CD8-positive, alpha-beta memory T cell (primary cell): ENCODE measurements at regions of chr5 and their contacts with region 1.

Region 1: GRCh38 chr5:79857714-79858409 is 133.2 kb downstream of the MTX3 start:
- DNase-seq: peak; percentile 45 to 76 (median 64)
- H3K4me3 ChIP-seq: no peak overlapping the region
- H3K4me3 Mint-ChIP-seq: no peak overlapping the region
- H3K27ac ChIP-seq: no peak overlapping the region
- H3K27ac Mint-ChIP-seq: no peak overlapping the region
- H3K4me1 ChIP-seq: no peaks in the 10 kb centered on the region
- H3K4me1 Mint-ChIP-seq: no peaks in the 10 kb centered on the region
- H3K27me3 ChIP-seq: no peaks in the 10 kb centered on the region
- H3K27me3 Mint-ChIP-seq: peaks cover 0 to 6% of the 10 kb centered on the region in 2 donors

Region 2: GRCh38 chr5:79552984-79553383 is 304.9 kb before region 1 on chr5:
- CTCF ChIA-PET with region 1: interaction called, 11 read pairs
- POLR2A ChIA-PET with region 1: no interaction called
- DNase-seq: no peak
- H3K4me3 ChIP-seq: no peak overlapping the region
- H3K4me3 Mint-ChIP-seq: no peak overlapping the region
- H3K27ac ChIP-seq: no peak overlapping the region
- H3K27ac Mint-ChIP-seq: peak overlapping the region in 1 of 8 donors; percentile 43
- H3K4me1 ChIP-seq: no peaks in the 10 kb centered on the region
- H3K4me1 Mint-ChIP-seq: peaks cover 1 to 16% (median 4%) of the 10 kb centered on the region in 3 donors
- H3K27me3 ChIP-seq: no peaks in the 10 kb centered on the region
- H3K27me3 Mint-ChIP-seq: no peaks in the 10 kb centered on the region

Region 3: DNA sequence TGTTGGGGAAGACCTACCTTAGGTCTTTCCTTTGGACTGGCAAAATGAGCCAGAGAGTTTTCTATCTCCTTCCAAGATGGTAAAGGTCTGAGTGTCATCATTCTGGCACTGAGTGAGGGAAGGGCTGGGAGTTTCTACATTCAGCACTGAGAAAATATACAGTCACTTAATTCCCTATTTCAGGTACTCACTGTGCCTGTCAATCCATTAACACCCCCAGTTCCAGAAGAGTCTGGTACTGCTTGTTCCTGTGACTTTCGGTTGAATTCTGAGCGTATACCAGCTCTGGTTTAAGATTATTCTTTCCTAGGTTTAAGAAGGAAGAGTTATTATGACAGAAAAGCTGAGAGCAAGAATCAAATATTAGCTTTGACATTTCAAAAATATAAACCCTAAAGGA is 64.8 kb after region 1 on chr5:
- CTCF ChIA-PET with region 1: no interaction called
- POLR2A ChIA-PET with region 1: no interaction called
- DNase-seq: no peak
- H3K4me3 ChIP-seq: no peak overlapping the region
- H3K4me3 Mint-ChIP-seq: no peak overlapping the region
- H3K27ac ChIP-seq: no peak overlapping the region
- H3K27ac Mint-ChIP-seq: peak overlapping the region in 1 of 8 donors; percentile 31
- H3K4me1 ChIP-seq: no peaks in the 10 kb centered on the region
- H3K4me1 Mint-ChIP-seq: no peaks in the 10 kb centered on the region
- H3K27me3 ChIP-seq: no peaks in the 10 kb centered on the region
- H3K27me3 Mint-ChIP-seq: peaks cover 12 to 20% of the 10 kb centered on the region in 2 donors